Natural killer cell (primary cell): ENCODE measurements at regions of chr10 and their contacts with region 1.

Region 1: DNA sequence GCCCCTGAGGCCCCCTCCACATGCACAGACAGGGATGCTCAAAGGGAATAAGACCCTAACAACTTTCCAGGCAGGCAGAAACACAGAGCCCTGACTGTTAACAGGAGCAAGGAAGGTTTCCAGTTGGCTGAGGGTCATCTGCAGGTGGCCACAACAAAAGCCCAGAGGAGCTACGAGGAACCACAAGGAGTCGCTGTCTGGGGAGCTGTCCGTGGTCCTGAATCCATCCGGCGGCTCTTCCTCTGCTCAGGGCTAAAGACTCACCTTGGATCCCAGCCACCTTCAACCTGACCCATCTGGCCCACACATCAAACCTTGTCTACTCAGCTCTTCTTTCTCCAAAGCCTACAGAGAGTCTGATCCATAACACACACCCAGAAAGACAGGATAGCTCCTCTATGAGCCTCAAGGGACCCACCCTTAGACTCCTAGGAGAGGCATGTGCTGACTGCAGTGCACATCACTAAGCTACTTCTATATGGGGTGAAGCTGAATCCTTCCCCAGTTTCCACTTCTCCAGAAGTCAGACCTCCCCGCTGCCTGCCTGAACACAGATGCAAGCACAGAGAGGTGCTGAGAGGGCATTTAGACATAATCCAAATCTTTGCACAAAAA is 104.0 kb downstream of the SLIT1 start:
- DNase-seq: peak; percentile 64 to 78
- ATAC-seq: peak; percentile 62 to 84 (median 66)
- H3K4me3 ChIP-seq: no peak overlapping the region
- H3K4me3 Mint-ChIP-seq: peak overlapping the region; percentile 25
- H3K27ac ChIP-seq: no peak overlapping the region
- H3K27ac Mint-ChIP-seq: no peak overlapping the region
- H3K4me1 ChIP-seq: no peaks in the 10 kb centered on the region
- H3K4me1 Mint-ChIP-seq: no peaks in the 10 kb centered on the region
- H3K27me3 ChIP-seq: peaks cover 10% of the 10 kb centered on the region
- H3K27me3 Mint-ChIP-seq: peaks cover 30 to 33% of the 10 kb centered on the region in 2 donors
- CTCF ChIP-seq: peak; percentile 74

Region 2: GRCh38 chr10:97096261-97097083 is 14.7 kb after region 1 on chr10:
- intact Hi-C with region 1: loop called (anchors 2 kb)
- DNase-seq: peak; percentile 33 to 65
- ATAC-seq: peak; percentile 74 to 85 (median 81)
- H3K4me3 ChIP-seq: no peak overlapping the region
- H3K4me3 Mint-ChIP-seq: peak overlapping the region; percentile 79
- H3K27ac ChIP-seq: peak overlapping the region; percentile 19
- H3K27ac Mint-ChIP-seq: peak overlapping the region; percentile 56 to 78
- H3K4me1 ChIP-seq: peaks cover 50% of the 10 kb centered on the region
- H3K4me1 Mint-ChIP-seq: peaks cover 36 to 41% of the 10 kb centered on the region in 2 donors
- H3K27me3 ChIP-seq: no peaks in the 10 kb centered on the region
- H3K27me3 Mint-ChIP-seq: peaks cover 24 to 36% of the 10 kb centered on the region in 2 donors
- CTCF ChIP-seq: no peak